ENCODE measurements at regions of chr3 and their contacts with region 1.

Region 1: GRCh38 chr3:150721285-150722130 is 17.8 kb upstream of the ERICH6 start:
- DNase-seq: peak; percentile 71 to 76 (median 71)
- ATAC-seq: peak; percentile 76
- H3K4me3 ChIP-seq: no peak overlapping the region
- H3K27ac ChIP-seq: no peak overlapping the region
- H3K4me1 ChIP-seq: peaks cover 9 to 15% of the 10 kb centered on the region in 2 experiments; a peak in 4 of 5 replicates
- H3K27me3 ChIP-seq: no peaks in the 10 kb centered on the region
- CTCF ChIP-seq: peak; percentile 72 to 92 (median 74); a peak in 5 of 6 replicates
- EP300 ChIP-seq: no peak
- POLR2A ChIP-seq: no peak
- RAD21 ChIP-seq: peak; percentile 90 to 98

Region 2: GRCh38 chr3:150528354-150528797 is 193.1 kb before region 1 on chr3:
- CTCF ChIA-PET with region 1: interaction called, 3 read pairs
- POLR2A ChIA-PET with region 1: no interaction called
- in situ Hi-C with region 1: no loop called
- intact Hi-C with region 1: loop called (anchors 5 kb)
- DNase-seq: peak in 2 of 4 experiments; percentile 22 to 28
- ATAC-seq: peak; percentile 69
- H3K4me3 ChIP-seq: no peak overlapping the region
- H3K27ac ChIP-seq: no peak overlapping the region
- H3K4me1 ChIP-seq: no peaks in the 10 kb centered on the region
- H3K27me3 ChIP-seq: no peaks in the 10 kb centered on the region
- CTCF ChIP-seq: peak in 2 of 3 experiments; percentile 19 to 57; a peak in 3 of 6 replicates
- EP300 ChIP-seq: no peak
- POLR2A ChIP-seq: no peak
- RAD21 ChIP-seq: peak; percentile 39 to 62; a peak in 3 of 4 replicates

Region 3: GRCh38 chr3:150737874-150738713 is 16.6 kb after region 1 on chr3:
- CTCF ChIA-PET with region 1: no interaction called
- POLR2A ChIA-PET with region 1: no interaction called
- in situ Hi-C with region 1: no loop called
- intact Hi-C with region 1: no loop called
- DNase-seq: peak; percentile 88 to 89 (median 88)
- ATAC-seq: peak; percentile 75
- H3K4me3 ChIP-seq: no peak overlapping the region
- H3K27ac ChIP-seq: peak overlapping the region; percentile 43
- H3K4me1 ChIP-seq: peaks cover 25 to 75% of the 10 kb centered on the region in 2 experiments
- H3K27me3 ChIP-seq: no peaks in the 10 kb centered on the region
- CTCF ChIP-seq: no peak
- EP300 ChIP-seq: peak; percentile 83; the same call in 1 of the 2 replicates
- POLR2A ChIP-seq: no peak
- RAD21 ChIP-seq: no peak

Region 4: GRCh38 chr3:150787741-150788370 is 66.3 kb after region 1 on chr3:
- CTCF ChIA-PET with region 1: interaction called, 5 read pairs
- POLR2A ChIA-PET with region 1: interaction called, 3 read pairs
- in situ Hi-C with region 1: no loop called
- intact Hi-C with region 1: loop called (anchors 1 kb)
- DNase-seq: peak; percentile 63 to 89 (median 68)
- ATAC-seq: peak; percentile 95
- H3K4me3 ChIP-seq: no peak overlapping the region
- H3K27ac ChIP-seq: no peak overlapping the region
- H3K4me1 ChIP-seq: peaks cover 5 to 9% of the 10 kb centered on the region in 2 experiments; a peak in 3 of 5 replicates
- H3K27me3 ChIP-seq: no peaks in the 10 kb centered on the region; a peak in 1 of 5 replicates
- CTCF ChIP-seq: peak; percentile 93 to 97 (median 96)
- EP300 ChIP-seq: no peak
- POLR2A ChIP-seq: no peak
- RAD21 ChIP-seq: peak; percentile 78 to 89

Region 5: GRCh38 chr3:150840802-150841515 is 119.5 kb after region 1 on chr3:
- CTCF ChIA-PET with region 1: no interaction called
- POLR2A ChIA-PET with region 1: no interaction called
- in situ Hi-C with region 1: loop called (anchors 10 kb)
- intact Hi-C with region 1: loop called (anchors 10 kb)
- DNase-seq: no peak
- ATAC-seq: no peak
- H3K4me3 ChIP-seq: no peak overlapping the region
- H3K27ac ChIP-seq: no peak overlapping the region
- H3K4me1 ChIP-seq: no peaks in the 10 kb centered on the region
- H3K27me3 ChIP-seq: peaks cover 0 to 2% of the 10 kb centered on the region in 2 experiments; a peak in 1 of 5 replicates
- CTCF ChIP-seq: peak; percentile 20 to 85 (median 57); a peak in 5 of 6 replicates
- EP300 ChIP-seq: no peak
- POLR2A ChIP-seq: no peak
- RAD21 ChIP-seq: 0 out of 4 replicates have a peak, but pooled peaks of 1 of the 2 experiments have one; percentile 18

Region 6: DNA sequence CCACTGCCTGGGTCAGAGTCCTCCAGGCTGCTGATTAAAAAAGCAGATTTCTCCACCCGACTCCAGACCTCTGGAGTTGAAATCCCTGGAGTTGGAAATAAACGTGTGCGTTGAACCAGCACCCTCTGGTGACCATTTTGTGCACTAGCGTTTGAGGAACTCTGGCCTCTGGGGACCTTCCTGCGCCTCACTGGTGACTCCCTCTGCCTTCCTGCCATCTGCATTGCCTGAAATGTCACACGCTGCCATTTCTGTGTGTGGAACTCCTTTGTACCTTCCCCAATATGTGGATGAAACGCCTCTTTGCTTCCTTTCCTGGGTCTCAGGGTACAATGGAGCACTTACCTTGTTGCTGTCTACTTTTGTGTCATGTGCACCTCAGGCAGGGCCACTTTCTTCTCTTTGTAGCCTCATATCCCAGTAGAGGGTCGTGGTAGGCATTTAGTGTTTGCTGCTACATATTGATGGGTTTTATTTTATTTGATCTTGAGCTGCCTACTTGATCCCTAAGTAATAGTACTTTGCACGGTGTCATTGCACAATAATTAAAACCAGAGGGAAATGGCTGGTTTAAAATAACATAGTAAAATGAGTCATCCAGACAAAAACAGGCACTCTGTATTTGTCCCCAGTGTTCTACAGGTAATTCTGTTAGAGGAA is 424.7 kb after region 1 on chr3:
- CTCF ChIA-PET with region 1: interaction called, 9 read pairs
- POLR2A ChIA-PET with region 1: no interaction called
- in situ Hi-C with region 1: no loop called
- intact Hi-C with region 1: loop called (anchors 5 kb)
- DNase-seq: peak; percentile 43 to 74 (median 52)
- ATAC-seq: peak; percentile 97
- H3K4me3 ChIP-seq: no peak overlapping the region
- H3K27ac ChIP-seq: no peak overlapping the region
- H3K4me1 ChIP-seq: no peaks in the 10 kb centered on the region
- H3K27me3 ChIP-seq: peaks cover 11 to 14% of the 10 kb centered on the region in 2 experiments; a peak in 4 of 5 replicates
- CTCF ChIP-seq: peak; percentile 85 to 90 (median 89)
- EP300 ChIP-seq: no peak
- POLR2A ChIP-seq: no peak
- RAD21 ChIP-seq: peak; percentile 85 to 91